ENCODE measurements at regions of chr9 and their contacts with region 1.

Region 1: GRCh38 chr9:34072868-34073590 is 24.3 kb upstream of the UBAP2 start:
- DNase-seq: no peak
- ATAC-seq: peak in 3 of 4 donors; percentile 21 to 71 (median 63)
- H3K4me3 ChIP-seq: no peak overlapping the region
- H3K27ac ChIP-seq: peak overlapping the region in 1 of 12 donors; percentile 32
- H3K4me1 ChIP-seq: peaks cover 0 to 8% (median 0%) of the 10 kb centered on the region in 12 donors
- H3K27me3 ChIP-seq: no peaks in the 10 kb centered on the region
- CTCF ChIP-seq: no peak
- POLR2A ChIP-seq: no peak

Region 2: DNA sequence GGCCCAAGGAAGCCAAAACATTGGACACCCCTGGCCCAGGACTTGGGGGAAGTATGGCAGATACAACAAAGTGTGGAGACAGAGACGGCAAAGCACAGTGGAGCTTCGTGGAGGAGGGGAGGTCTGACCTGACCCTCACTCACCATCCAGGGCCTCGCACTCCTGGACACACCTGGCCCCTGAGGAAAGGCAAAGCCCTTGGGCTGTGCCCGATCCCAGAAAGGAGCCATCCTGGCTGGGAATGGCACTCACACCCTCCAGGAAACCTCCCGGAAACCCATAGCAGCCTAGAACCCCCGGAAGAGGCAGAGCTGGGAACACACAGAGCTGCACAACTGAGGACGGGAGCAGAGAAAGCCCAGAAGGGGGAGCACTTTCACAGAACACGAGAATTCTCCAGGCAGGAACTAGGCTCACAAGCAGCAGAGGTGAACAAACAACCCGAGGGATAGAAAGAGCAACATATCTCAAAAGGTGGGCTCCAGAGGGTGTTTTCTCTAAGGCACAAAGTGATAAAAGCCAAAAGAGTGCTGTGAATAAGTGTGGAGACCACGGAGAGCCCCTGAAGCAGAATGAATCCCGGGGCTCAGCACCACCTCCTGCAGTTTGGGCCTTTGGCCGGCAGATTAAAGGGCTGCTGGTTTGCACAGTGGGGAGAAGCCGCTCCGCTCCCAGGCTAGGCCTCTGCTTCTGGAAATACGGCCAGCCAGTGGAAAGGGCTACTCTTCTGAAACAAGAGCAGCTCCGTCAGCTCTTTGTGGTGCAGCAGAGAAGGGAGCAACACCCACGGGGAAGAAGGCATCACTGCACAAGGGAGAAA is 147.8 kb before region 1 on chr9:
- intact Hi-C with region 1: loop called in 7 of 10 experiments (anchors 2 to 10 kb)
- DNase-seq: peak in 4 of 5 donors; percentile 43 to 56 (median 48)
- ATAC-seq: peak; percentile 30 to 71 (median 62)
- H3K4me3 ChIP-seq: no peak overlapping the region
- H3K27ac ChIP-seq: peak overlapping the region in 10 of 12 donors; percentile 8 to 50 (median 40)
- H3K4me1 ChIP-seq: peaks cover 0 to 42% (median 13%) of the 10 kb centered on the region in 12 donors
- H3K27me3 ChIP-seq: no peaks in the 10 kb centered on the region
- CTCF ChIP-seq: peak; percentile 40 to 74 (median 62)
- POLR2A ChIP-seq: no peak

Region 3: GRCh38 chr9:34010979-34011378 is 62.0 kb before region 1 on chr9:
- intact Hi-C with region 1: loop called in 5 of 10 experiments (anchors 5 to 10 kb)
- DNase-seq: no peak
- ATAC-seq: no peak
- H3K4me3 ChIP-seq: no peak overlapping the region
- H3K27ac ChIP-seq: no peak overlapping the region
- H3K4me1 ChIP-seq: no peaks in the 10 kb centered on the region
- H3K27me3 ChIP-seq: no peaks in the 10 kb centered on the region
- CTCF ChIP-seq: peak in 9 of 12 donors; percentile 16 to 42 (median 40)
- POLR2A ChIP-seq: no peak

Region 4: GRCh38 chr9:34059281-34059680 is 13.7 kb before region 1 on chr9:
- intact Hi-C with region 1: no loop called
- DNase-seq: no peak
- ATAC-seq: no peak
- H3K4me3 ChIP-seq: no peak overlapping the region
- H3K27ac ChIP-seq: no peak overlapping the region
- H3K4me1 ChIP-seq: no peaks in the 10 kb centered on the region
- H3K27me3 ChIP-seq: no peaks in the 10 kb centered on the region
- CTCF ChIP-seq: no peak
- POLR2A ChIP-seq: no peak